ENCODE measurements at regions of chr18 and their contacts with region 1.

Region 1: DNA sequence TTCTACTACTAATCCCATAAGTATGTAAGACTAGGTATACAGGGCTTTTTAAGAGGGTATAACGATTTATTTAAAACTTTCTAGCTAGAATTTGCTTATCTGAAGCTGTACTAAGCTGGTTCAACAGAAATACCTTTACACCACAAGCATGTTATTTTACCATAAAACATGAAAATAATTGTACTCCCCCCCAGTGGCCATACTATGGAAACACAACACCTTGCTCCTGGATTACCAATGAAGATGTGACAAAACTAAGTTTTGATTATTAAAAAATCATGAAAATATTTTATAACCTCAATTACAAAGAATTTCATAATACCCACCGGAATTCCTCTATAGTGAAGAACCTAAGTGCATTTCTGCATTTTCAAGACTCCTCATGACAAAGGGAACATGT is 27.3 kb downstream of the LPIN2 start:
- DNase-seq: no peak
- H3K4me3 ChIP-seq: no peak overlapping the region
- CTCF ChIP-seq: no peak

Region 2: GRCh38 chr18:2956056-2956455 is 29.6 kb before region 1 on chr18:
- CTCF ChIA-PET with region 1: no interaction called
- POLR2A ChIA-PET with region 1: no interaction called
- DNase-seq: no peak
- H3K4me3 ChIP-seq: no peak overlapping the region
- CTCF ChIP-seq: no peak

Region 3: DNA sequence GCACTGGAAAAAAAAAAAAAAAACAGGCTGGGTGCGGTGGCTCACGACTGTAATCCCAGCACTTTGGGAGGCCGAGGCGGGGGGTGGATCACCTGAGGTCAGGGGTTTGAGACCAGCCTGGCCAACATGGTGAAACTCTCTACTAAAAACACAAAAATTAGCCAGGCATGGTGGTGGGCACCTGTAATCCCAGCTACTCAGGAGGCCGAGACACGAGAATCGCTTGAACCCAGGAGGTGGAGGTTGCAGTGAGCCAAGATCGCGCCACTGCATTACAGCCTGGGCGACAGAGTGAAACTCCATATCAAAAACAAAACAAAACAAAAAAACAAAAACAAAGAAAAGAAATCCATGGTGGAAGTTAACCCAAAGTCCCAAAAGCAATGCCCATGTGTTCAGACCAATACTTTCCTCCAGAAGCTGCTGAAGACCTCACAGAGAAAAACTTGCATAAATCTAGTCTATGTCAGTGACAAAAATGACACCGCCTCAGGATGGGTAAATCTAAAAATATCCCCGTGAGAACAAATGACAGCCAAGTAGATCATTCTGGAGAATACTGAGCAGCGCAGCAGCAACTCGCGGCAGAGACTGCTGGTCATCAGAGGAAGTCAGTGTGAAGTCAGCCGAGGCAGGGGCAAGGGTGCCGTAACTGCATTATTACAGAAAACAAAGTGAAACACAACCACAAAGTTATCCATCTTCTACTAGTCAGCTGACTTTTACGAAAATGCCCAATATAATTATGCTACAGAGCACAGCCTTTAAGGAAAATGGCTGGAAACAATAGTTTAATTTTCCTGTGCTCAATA is 13.7 kb before region 1 on chr18:
- CTCF ChIA-PET with region 1: interaction called, 14 read pairs
- POLR2A ChIA-PET with region 1: no interaction called
- DNase-seq: no peak
- H3K4me3 ChIP-seq: no peak overlapping the region
- CTCF ChIP-seq: no peak

Region 4: DNA sequence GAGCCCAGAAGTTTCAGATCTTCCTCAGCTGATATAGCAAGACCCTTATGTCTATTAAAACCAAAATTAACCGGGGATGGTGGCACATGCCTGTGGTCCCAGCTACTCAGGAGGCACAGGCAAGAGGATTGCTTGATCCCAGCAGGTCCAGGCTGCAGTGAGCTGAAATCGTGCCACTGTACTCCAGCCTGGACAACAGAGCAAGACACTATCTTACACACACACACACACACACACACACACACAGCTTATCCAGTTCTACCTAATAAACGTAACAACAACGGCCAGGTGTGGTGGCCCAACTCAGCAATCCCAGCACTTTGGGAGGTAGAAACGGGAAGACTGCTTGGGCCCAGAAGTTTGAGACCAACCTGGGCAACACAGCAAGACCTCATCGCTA is 19.8 kb after region 1 on chr18:
- CTCF ChIA-PET with region 1: interaction called, 14 read pairs
- POLR2A ChIA-PET with region 1: interaction called, 6 read pairs
- DNase-seq: no peak
- H3K4me3 ChIP-seq: no peak overlapping the region
- CTCF ChIP-seq: no peak

Region 5: DNA sequence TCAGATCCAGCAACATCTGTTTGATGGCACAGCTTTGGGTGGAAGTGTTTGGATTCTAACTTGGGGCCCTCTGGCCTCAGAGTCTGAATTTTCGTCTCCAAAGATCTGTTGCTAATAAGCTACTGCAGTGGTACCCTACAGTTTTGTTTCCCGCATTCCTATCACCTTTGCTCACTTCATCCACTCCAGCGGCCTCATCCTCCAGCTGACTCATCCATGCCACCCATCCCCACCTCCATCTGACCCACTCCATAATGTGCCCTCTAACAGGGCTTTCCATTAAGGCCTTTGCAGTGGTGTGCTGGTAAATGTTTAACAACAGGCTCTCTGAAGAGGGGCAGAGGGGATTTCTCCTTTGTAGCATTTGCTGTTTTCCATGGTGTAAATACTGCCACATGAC is 689.8 kb after region 1 on chr18:
- CTCF ChIA-PET with region 1: no interaction called
- POLR2A ChIA-PET with region 1: no interaction called
- DNase-seq: no peak
- H3K4me3 ChIP-seq: no peak overlapping the region
- CTCF ChIP-seq: no peak